Common myeloid progenitor, CD34-positive (primary cell): ENCODE measurements at regions of chr2 and their contacts with region 1.

Region 1: GRCh38 chr2:102350137-102350793 is 5.3 kb upstream of the IL18R1 start:
- DNase-seq: peak in 1 of 3 donors; percentile 55
- H3K4me3 ChIP-seq: no peak overlapping the region
- H3K27ac ChIP-seq: no peak overlapping the region
- H3K4me1 ChIP-seq: peaks cover 0 to 2% (median under 1%) of the 10 kb centered on the region in 4 experiments
- H3K27me3 ChIP-seq: no peaks in the 10 kb centered on the region

Region 2: DNA sequence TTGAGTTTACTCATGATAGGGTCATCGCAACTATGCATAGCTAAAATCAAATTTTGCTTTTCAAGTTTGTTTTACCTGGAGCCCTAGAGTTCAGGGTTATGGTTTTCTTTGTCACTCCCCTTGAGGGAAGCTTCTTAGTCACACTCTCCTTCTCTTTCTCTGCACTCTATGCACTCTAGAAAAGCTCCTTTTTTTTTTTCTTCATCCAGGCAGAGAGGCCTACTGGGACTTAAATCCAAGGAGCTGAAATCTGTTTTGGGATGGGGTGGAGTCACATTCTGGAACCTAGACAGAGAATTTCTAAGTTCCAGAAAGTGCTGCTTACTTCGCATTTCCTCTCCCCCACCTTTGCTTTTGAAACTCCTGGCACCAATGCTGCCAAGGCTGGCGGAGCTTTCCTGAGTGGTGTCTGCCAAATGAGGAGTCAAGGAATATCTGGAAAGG is 13.7 kb before region 1 on chr2:
- CTCF ChIA-PET with region 1: interaction called, 11 read pairs
- POLR2A ChIA-PET with region 1: no interaction called
- DNase-seq: peak in 1 of 3 donors; percentile 20
- H3K4me3 ChIP-seq: no peak overlapping the region
- H3K27ac ChIP-seq: no peak overlapping the region
- H3K4me1 ChIP-seq: peaks cover 0 to 19% (median 13%) of the 10 kb centered on the region in 4 experiments
- H3K27me3 ChIP-seq: no peaks in the 10 kb centered on the region